ENCODE measurements at regions of chr3 and their contacts with region 1.

Region 1: DNA sequence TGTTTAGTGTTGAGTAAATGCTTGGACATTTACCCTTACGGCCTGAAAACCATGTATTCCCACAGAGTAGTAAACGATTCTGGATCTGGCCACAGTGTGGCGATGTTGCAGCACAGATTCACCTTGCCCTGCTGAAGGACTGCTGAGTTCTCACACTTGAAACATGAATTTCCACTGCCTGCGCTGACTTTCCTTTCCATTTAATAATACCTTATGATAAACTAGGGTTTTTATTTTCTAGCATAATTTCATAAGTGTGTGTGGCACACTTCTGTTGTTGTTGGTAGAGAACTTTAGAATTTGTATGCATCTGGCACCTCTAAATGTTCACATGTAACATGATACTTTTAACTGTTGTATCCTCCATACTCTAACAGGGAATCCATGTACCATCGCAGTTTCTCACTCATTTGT is 53.9 kb downstream of the C3orf38 start:
- DNase-seq: peak; percentile 66
- H3K4me3 ChIP-seq: no peak overlapping the region
- H3K27ac ChIP-seq: no peak overlapping the region
- H3K4me1 ChIP-seq: no peaks in the 10 kb centered on the region
- H3K27me3 ChIP-seq: no peaks in the 10 kb centered on the region
- CTCF ChIP-seq: peak; percentile 80

Region 2: DNA sequence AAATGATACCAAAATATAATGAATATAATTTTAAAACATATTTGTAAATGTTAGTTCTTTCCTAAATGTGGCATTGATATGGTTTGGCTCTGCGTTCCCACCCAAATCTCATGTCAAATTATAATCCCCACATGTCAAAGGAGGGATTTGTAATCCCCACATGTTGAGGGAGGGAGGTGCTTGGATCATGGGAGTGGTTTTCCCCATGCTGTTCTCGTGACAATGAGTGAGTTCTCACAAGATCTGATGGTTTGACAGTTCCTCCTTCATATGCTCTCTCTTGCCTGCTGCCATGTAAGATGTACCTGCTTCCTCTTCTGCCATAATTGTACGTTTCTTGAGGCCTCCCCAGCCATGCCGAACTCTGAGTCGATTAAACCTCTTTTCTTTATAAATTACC is 156.9 kb before region 1 on chr3:
- intact Hi-C with region 1: no loop called
- DNase-seq: no peak
- H3K4me3 ChIP-seq: no peak overlapping the region
- H3K27ac ChIP-seq: no peak overlapping the region
- H3K4me1 ChIP-seq: no peaks in the 10 kb centered on the region
- H3K27me3 ChIP-seq: no peaks in the 10 kb centered on the region
- CTCF ChIP-seq: no peak

Region 3: DNA sequence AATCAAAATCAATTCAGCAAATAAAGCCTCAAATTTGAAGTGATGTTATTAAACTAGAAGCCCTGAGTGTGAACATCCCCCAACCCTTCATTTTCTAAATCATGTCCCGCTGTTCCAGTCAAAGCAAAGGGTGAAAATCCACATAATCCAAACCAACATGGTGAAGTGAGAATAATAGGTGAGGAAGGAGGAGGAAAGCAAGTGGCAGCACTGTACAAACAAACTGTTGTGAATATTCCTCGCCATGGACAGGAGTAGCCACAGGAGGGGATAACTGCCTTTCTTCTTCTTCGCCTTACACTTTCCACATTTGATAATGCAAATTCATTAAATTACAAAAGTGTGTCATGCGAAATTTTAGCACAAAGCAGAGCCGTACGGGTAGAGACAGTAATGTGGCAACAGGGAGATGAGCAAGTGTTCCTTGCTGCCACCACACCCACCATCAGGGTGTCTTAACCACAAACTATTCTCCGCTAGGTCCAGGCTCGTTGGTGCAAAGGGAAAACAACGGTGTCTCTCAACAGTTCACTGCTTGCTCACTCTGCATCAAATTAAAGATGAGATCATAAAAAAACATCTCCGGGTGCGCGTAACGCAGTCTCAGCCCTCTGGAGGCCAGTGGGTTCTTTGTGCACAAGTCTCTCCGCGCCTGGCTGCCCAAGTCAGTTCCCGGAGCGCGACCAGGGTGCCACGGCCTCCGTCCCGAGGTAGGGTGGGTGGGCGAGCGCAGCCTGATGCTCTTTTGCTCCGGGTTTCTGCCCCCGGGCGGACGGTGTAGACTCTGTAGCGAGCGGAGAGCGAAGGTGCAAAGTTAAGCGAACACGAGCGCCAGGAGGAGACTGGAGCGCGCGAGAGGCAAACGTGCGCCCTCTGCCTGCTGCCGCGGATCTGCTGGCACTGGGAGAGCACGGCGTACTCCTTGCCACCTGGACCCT is 910.5 kb after region 1 on chr3:
- intact Hi-C with region 1: loop called (anchors 10 kb)
- DNase-seq: peak; percentile 61
- H3K4me3 ChIP-seq: peak overlapping the region; percentile 26
- H3K27ac ChIP-seq: no peak overlapping the region
- H3K4me1 ChIP-seq: no peaks in the 10 kb centered on the region
- H3K27me3 ChIP-seq: no peaks in the 10 kb centered on the region
- CTCF ChIP-seq: peak; percentile 52